BJ (cell line): ENCODE measurements at regions of chr5 and their contacts with region 1.

Region 1: DNA sequence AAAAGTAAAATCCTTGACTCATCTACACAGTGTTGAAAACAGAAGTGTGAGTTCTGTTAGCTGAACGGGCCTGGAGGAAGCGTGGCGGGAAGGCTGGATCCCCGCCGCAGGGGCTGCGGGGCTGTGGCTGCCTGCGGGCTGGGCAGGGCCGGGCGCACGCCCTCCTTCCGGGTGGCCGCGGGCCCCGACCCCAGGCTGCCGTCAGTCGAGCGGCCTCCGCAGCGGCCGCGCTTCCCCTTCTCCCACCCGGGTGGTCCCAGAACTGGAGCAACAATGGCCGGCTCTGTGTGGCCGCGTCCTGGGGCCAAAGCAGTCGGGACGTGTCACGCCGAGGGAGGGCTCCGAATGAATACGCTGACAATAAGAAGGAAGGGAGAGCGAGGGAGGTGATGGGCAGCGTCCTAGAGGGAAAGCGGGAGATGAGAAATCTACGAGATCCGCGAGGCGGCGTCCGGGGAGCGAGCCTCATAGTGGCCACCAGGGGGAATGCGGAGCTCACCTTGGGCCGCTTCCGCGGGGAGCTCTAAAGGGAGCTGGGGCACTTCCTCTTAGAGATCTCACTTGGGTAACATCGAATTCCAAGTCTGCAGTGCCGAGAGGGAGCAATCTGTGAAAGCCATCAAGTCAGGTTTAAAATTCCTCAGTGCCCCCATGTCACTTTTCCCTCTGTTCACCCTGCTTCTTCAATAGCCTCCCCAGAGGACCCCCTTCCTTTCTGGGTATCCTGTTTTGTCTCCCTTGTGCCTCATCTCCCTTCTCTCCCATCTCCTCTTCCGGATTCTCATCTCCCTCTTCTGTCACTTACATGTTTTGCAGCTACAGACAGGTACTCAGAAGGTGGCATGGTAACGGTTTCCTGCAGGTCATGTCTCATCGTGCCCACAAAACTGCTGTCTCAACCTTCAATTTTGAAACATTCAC is 83.9 kb downstream of the SLC1A3 start:
- DNase-seq: no peak
- H3K4me3 ChIP-seq: peak overlapping the region; percentile 48
- H3K27me3 ChIP-seq: no peaks in the 10 kb centered on the region
- CTCF ChIP-seq: peak; percentile 96

Region 2: DNA sequence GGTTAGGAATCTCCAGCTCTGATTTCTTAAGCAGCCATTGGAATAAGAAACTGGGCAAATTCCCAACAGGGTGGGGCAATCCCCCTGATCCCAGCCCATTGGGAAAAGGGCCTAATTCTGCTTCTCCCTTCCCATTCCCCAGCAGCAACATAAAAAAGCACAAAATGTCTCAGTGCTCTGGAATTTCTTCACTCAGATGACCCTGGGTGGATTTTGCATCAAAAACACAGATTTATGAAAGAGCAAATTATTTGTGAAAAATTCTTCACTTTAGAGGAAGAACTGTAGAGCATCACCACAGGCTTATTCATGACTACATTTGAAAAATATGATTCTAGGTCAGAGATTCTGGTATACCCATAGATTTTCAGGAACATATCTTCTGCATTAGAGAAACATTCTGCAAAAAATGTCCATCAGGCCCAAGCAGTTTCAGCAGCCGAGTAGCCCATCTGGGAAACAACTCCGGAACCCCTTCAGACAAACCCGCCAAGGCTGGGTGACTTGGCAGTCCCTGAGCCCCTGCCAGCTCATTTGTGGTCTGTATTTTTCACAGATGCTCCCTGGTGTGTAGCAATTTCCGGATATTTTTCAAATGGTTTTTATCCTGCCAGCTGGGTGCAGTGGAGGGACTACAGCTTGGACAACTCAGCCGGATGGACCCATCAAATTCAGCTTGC is 286.5 kb before region 1 on chr5:
- CTCF ChIA-PET with region 1: interaction called, 18 read pairs
- POLR2A ChIA-PET with region 1: no interaction called
- DNase-seq: peak; percentile 84
- H3K4me3 ChIP-seq: no peak overlapping the region
- H3K27me3 ChIP-seq: peaks cover 2% of the 10 kb centered on the region; the same call in 1 of the 2 replicates
- CTCF ChIP-seq: no peak

Region 3: DNA sequence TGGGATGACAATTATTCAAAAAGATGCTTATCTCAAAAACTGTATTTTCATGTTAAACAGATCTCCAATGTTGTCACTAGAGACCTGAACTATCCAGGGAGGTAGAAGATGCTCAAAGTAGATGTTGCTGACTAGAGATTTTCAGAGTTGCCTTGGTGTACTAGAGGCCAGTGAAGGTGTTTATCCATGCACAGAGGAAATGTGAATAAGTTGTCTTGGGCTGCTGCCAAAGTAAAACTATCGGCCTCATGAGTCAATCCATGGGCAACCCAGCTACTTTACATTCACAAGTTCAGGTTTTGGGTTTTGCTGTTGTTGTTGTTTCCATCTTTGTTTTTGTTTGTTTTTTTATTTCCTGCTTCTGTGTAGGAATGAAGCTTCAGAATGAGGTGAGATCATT is 247.5 kb before region 1 on chr5:
- CTCF ChIA-PET with region 1: no interaction called
- POLR2A ChIA-PET with region 1: no interaction called
- DNase-seq: no peak
- H3K4me3 ChIP-seq: no peak overlapping the region
- H3K27me3 ChIP-seq: peaks cover 1% of the 10 kb centered on the region
- CTCF ChIP-seq: no peak